Transverse colon (tissue), 4 donors: ENCODE measurements at regions of chr17 and their contacts with region 1.

Region 1: GRCh38 chr17:33531311-33531710 is 238.2 kb upstream of the ASIC2 start:
- DNase-seq: no peak
- H3K4me3 ChIP-seq: no peak overlapping the region
- H3K27ac ChIP-seq: no peak overlapping the region
- H3K4me1 ChIP-seq: no peaks in the 10 kb centered on the region
- H3K27me3 ChIP-seq: no peaks in the 10 kb centered on the region
- CTCF ChIP-seq: no peak
- EP300 ChIP-seq: no peak
- POLR2A ChIP-seq: no peak

Region 2: GRCh38 chr17:33595828-33596227 is 64.5 kb after region 1 on chr17:
- in situ Hi-C with region 1: loop called in 1 of 4 experiments (anchors 10 kb)
- intact Hi-C with region 1: no loop called
- DNase-seq: no peak
- H3K4me3 ChIP-seq: no peak overlapping the region
- H3K27ac ChIP-seq: no peak overlapping the region
- H3K4me1 ChIP-seq: no peaks in the 10 kb centered on the region
- H3K27me3 ChIP-seq: no peaks in the 10 kb centered on the region
- CTCF ChIP-seq: no peak
- EP300 ChIP-seq: no peak
- POLR2A ChIP-seq: no peak